Transverse colon (tissue), 4 donors: ENCODE measurements at regions of chr1 and their contacts with region 1.

Region 1: DNA sequence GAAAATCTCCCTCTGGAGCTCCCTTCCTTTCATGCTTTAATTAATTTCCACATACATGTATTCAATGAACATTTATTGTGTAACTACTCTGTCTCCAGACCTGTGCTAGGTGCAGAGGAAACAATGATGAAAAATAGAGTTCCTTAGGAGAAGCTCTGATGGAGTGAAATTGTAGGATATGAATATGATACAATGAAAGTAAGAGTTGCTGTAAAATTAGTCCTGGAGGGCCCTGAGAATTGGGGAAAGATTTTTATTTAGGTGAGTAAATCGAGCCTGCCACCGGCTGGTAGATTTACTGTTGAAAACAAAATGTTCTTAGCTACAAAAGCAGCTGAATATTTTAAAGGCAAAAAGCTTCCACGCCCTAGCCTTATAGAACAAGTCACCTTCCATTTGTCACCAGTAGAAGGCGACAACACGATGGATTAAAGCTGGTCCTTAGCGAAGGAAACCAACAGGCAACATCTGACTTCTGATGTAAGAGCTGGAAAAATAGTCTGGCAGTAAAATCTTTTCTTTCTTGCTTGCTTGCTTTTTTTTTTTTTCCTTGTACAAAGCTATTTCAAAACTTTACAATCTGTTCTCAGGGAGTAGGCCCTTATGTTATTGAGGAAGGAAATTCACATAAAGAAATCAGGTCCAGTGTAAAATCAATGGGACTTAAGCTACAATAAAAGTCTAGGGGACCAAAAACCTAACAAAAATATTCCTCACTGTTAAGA is 82.0 kb upstream of the ROR1 start:
- DNase-seq: peak; percentile 62
- H3K4me3 ChIP-seq: no peak overlapping the region
- H3K27ac ChIP-seq: peak overlapping the region; percentile 38 to 54 (median 49)
- H3K4me1 ChIP-seq: peaks cover 0 to 16% (median 5%) of the 10 kb centered on the region in 4 donors
- H3K27me3 ChIP-seq: no peaks in the 10 kb centered on the region
- CTCF ChIP-seq: peak; percentile 68 to 90 (median 79)
- EP300 ChIP-seq: no peak
- POLR2A ChIP-seq: no peak

Region 2: GRCh38 chr1:63601061-63601460 is 90.8 kb before region 1 on chr1:
- in situ Hi-C with region 1: no loop called
- intact Hi-C with region 1: no loop called
- DNase-seq: no peak
- H3K4me3 ChIP-seq: no peak overlapping the region
- H3K27ac ChIP-seq: no peak overlapping the region
- H3K4me1 ChIP-seq: no peaks in the 10 kb centered on the region
- H3K27me3 ChIP-seq: no peaks in the 10 kb centered on the region
- CTCF ChIP-seq: no peak
- EP300 ChIP-seq: no peak
- POLR2A ChIP-seq: no peak

Region 3: GRCh38 chr1:63773815-63774616 is 82.2 kb after region 1 on chr1 and contains the start of gene ROR1:
- in situ Hi-C with region 1: no loop called
- intact Hi-C with region 1: loop called (anchors 10 kb)
- DNase-seq: peak; percentile 89
- H3K4me3 ChIP-seq: peak within 1 kb of the TSS; percentile 52 to 79 (median 66)
- H3K27ac ChIP-seq: peak within 1 kb of the TSS; percentile 87 to 92 (median 88)
- H3K4me1 ChIP-seq: peaks cover 0 to 28% (median 7%) of the 10 kb centered on the region in 4 donors
- H3K27me3 ChIP-seq: peaks cover 9% of the 10 kb centered on the region
- CTCF ChIP-seq: peak; percentile 56 to 77 (median 64)
- EP300 ChIP-seq: no peak
- POLR2A ChIP-seq: peak; percentile 47
- total RNA-seq, gene ROR1: 3.0 to 6.7 (median 4.6) TPM

Region 4: GRCh38 chr1:63917571-63918417 is 225.9 kb after region 1 on chr1:
- in situ Hi-C with region 1: loop called in 1 of 4 experiments (anchors 25 kb)
- intact Hi-C with region 1: no loop called
- DNase-seq: no peak
- H3K4me3 ChIP-seq: no peak overlapping the region
- H3K27ac ChIP-seq: no peak overlapping the region
- H3K4me1 ChIP-seq: peaks cover 12 to 41% (median 34%) of the 10 kb centered on the region in 4 donors
- H3K27me3 ChIP-seq: no peaks in the 10 kb centered on the region
- CTCF ChIP-seq: peak in 1 of 5 experiments; percentile 8
- EP300 ChIP-seq: no peak
- POLR2A ChIP-seq: no peak

Region 5: DNA sequence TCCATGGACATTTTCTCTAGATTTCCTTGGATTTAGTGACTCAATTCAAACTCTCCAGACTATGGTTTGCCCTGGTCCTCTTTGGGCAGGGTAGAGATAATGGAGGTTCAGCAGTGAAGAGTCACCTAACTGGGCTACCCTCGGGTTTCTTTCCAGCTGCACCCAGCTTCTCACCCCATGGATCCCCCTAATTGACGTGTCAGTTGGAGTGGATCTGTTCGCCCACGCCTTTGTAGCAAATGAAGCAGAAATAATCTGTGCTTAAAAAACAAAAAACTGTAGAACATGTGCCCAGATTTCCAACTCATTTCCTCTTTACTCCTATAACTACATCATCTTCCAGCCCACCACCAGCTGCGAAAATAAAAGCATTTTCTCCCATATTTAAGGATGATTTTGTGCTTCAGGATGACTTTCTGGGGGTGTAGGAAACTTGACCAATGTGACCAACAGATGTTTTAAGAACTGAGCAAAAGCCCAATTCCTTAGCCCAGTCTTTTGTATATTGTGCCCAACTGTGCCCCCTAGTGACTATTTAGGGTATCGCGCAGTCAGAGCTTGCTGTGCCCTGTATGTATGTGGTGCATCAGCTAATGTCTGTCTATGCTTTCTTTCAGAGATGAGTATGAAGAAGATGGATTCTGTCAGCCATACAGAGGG is 445.0 kb after region 1 on chr1:
- in situ Hi-C with region 1: loop called (anchors 10 to 25 kb)
- intact Hi-C with region 1: no loop called
- DNase-seq: peak; percentile 80
- H3K4me3 ChIP-seq: no peak overlapping the region
- H3K27ac ChIP-seq: peak overlapping the region in 1 of 4 donors; percentile 30
- H3K4me1 ChIP-seq: peaks cover 0 to 11% (median 0%) of the 10 kb centered on the region in 4 donors
- H3K27me3 ChIP-seq: no peaks in the 10 kb centered on the region
- CTCF ChIP-seq: peak; percentile 84 to 91 (median 88)
- EP300 ChIP-seq: no peak
- POLR2A ChIP-seq: no peak

Region 6: GRCh38 chr1:64147759-64148158 is 455.9 kb after region 1 on chr1:
- in situ Hi-C with region 1: loop called in 3 of 4 experiments (anchors 10 to 25 kb)
- intact Hi-C with region 1: no loop called
- DNase-seq: no peak
- H3K4me3 ChIP-seq: no peak overlapping the region
- H3K27ac ChIP-seq: no peak overlapping the region
- H3K4me1 ChIP-seq: no peaks in the 10 kb centered on the region
- H3K27me3 ChIP-seq: no peaks in the 10 kb centered on the region
- CTCF ChIP-seq: no peak
- EP300 ChIP-seq: no peak
- POLR2A ChIP-seq: no peak

Region 7: DNA sequence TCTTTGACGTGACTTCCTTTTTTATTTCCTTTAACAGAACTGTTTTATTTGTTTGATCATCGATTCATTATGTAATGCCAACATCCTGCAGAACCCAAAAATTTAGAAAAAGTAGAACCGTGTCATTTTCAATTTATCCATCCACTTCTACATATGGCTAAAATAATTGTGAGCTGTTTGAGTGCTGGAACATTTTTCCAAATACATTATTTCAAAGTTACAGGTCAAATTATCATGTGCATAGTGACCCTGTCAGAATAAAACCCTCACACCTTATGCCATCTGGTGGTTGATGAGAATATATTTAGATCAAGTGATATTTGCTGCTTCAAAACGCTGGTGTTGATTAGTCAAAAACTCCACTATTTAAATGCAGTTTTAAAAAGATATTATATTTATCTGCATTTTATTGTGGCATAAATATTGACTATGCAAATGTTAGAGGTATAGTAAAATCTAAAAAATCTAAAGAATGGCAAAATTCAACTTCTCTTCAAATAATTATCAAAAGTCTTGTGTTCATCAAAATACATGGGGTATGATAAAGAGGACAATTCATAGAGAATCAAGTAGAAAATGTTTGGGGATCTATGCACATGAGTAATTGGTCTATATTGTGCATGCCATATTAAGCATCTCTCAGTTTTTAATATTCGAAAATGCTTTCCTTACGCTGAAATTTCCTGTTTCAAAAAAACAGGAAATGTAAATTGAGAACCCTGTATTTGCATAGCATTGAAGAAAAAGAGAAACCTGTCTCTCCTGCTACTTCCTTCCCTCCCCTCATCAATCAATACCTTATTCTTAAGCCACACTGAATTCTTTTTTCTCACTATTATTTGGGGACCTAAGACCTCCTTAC is 551.3 kb after region 1 on chr1:
- in situ Hi-C with region 1: loop called in 2 of 4 experiments (anchors 25 kb)
- intact Hi-C with region 1: no loop called
- DNase-seq: no peak
- H3K4me3 ChIP-seq: no peak overlapping the region
- H3K27ac ChIP-seq: no peak overlapping the region
- H3K4me1 ChIP-seq: peaks cover 0 to 6% (median 0%) of the 10 kb centered on the region in 4 donors
- H3K27me3 ChIP-seq: peaks cover 4% of the 10 kb centered on the region
- CTCF ChIP-seq: peak; percentile 35 to 59 (median 44)
- EP300 ChIP-seq: no peak
- POLR2A ChIP-seq: no peak